HEK293 (cell line): ENCODE measurements at regions of chr6 and their contacts with region 1.

Region 1: GRCh38 chr6:26342106-26343004 is 22.6 kb upstream of the BTN3A2 start:
- H3K4me3 ChIP-seq: 0 out of 2 replicates have a peak overlapping the region, but pooled peaks have one; percentile 13
- H3K27ac ChIP-seq: no peak overlapping the region
- H3K4me1 ChIP-seq: no peaks in the 10 kb centered on the region
- CTCF ChIP-seq: no peak

Region 2: DNA sequence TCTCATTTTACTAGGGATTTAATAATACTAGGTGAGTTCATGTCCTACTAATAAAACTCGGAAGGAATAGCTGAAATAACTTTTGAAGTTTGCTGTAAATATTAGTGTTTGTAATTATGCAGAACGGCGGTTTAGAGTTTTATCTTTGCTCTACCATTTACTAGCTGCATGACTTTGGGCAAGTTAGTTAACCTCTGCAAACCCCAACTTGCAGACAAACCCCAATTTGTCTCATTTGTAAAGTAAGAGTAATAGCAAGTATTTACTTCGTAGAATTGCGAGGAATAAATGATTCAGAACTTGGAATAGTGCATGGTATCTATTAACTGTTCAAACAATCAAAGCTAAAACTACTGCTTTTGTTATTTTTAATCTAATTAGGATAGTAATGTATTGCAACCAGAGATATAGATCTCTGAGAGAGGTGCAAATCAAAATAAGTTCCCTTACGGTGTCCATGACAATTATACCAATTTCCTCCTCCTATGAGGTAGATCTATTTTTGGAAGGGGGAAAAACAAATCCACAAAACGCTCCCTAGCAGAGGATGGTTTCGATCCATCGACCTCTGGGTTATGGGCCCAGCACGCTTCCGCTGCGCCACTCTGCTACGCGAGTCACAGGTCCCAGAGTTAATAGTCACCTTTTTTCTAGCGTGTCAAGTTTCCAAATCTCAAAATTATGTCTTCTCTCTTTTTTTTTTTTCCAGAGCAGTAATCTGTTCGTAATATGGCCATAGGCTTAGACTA is 12.4 kb before region 1 on chr6:
- CTCF ChIA-PET with region 1: interaction called, 19 read pairs
- POLR2A ChIA-PET with region 1: interaction called, 3 read pairs
- H3K4me3 ChIP-seq: peak overlapping the region; percentile 73
- H3K27ac ChIP-seq: no peak overlapping the region
- H3K4me1 ChIP-seq: no peaks in the 10 kb centered on the region; the same call in 1 of the 2 replicates
- CTCF ChIP-seq: no peak

Region 3: DNA sequence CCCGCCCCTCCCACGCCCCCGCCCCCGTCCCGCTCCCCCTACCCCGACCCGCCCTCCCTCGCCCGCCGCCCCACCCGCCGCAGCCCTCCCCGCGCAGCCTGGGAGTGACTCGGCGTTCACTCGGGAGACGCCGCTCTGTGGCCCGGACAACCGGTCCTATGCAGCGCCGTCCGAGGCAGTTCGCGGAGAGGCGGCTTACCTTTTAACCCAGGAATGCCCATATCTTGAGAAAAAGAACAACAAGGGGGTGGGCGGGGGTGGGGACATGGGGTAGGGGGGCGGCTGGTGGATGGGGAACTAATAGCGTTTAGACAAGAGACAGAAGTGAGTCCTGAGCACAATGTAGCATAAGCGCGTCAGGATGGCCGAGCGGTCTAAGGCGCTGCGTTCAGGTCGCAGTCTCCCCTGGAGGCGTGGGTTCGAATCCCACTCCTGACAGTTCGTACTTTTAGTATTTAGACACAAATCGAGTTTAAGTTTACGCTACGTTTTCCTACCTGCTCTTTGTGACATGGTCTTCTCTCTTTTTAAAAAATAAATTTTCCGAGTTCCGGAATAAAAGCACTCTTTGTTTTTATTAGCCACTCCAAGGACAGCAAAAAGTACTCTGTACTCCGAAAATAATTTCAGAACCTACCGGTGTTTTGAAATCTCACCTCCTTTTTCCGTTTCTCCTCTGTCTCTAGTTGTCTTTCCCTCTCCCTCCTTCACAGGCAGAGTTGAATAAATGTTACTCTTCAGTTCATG is 178.7 kb after region 1 on chr6:
- CTCF ChIA-PET with region 1: interaction called, 10 read pairs
- POLR2A ChIA-PET with region 1: interaction called, 8 read pairs
- H3K4me3 ChIP-seq: peak overlapping the region; percentile 62
- H3K27ac ChIP-seq: peak overlapping the region; percentile 98
- H3K4me1 ChIP-seq: 0 out of 2 replicates have a peak, but pooled peaks cover 2% of the 10 kb centered on the region
- CTCF ChIP-seq: no peak

Region 4: DNA sequence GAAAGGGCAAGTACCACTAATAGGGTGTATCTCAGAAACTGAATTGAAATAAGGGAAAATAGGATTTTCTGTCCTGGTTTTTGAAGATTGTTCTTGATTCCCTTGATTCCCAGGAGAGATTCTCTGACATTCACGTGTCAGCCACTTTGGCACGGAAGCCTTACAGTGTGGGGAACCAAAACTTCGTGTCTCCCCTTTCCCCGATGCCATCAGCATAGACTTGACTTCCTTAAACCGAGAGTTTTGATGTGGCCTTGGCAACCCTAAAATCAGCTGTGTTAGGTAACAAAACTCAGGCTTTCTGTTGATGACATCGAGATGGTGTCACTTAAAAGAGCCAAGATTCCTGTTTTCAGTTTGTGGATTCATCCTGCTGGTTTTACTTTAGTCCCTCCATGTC is 203.3 kb after region 1 on chr6:
- CTCF ChIA-PET with region 1: interaction called, 11 read pairs
- POLR2A ChIA-PET with region 1: no interaction called
- H3K4me3 ChIP-seq: no peak overlapping the region
- H3K27ac ChIP-seq: no peak overlapping the region
- H3K4me1 ChIP-seq: no peaks in the 10 kb centered on the region
- CTCF ChIP-seq: no peak

Region 5: DNA sequence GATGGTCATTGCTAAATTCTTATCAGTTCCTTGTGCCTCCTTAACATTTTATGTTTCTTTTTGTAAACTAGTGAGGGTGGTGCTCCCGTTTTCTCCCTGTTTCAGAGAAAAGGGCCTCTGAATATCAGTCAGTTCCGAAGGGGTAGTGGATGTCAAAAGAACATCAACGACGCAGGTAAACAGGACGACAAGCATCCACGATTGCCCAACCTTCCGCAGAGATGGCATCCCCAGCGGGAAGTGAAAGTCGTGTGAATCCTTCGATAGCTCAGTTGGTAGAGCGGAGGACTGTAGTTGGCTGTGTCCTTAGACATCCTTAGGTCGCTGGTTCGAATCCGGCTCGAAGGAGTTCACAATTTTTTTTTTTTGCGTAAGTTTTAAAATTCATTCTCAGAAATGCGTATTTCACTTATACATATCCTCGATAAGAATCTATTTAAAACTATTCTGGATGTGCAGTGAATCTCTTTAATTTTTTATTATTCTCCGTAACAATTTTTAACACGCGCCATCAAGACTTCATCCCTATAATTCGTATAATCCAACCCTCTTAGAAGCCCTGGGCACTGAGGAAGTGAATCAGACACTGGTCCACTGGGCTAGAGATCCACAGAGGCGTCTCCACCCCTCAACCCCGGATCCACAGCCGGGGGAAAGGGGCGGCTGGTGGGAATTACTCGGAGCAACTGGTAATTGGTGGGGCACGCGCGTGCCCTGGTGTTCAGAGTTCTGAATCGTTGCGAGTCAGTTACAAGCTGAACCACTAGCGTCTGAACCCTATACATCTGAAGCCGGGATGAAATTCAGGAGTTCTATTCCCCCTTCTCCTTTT is 226.5 kb after region 1 on chr6:
- CTCF ChIA-PET with region 1: interaction called, 14 read pairs
- POLR2A ChIA-PET with region 1: interaction called, 6 read pairs
- H3K4me3 ChIP-seq: peak overlapping the region; percentile 70
- H3K27ac ChIP-seq: peak overlapping the region; percentile 62
- H3K4me1 ChIP-seq: no peaks in the 10 kb centered on the region
- CTCF ChIP-seq: peak; percentile 70